ENCODE measurements at regions of chr4 and their contacts with region 1.

Region 1: GRCh38 chr4:140637836-140638235 is 69.1 kb upstream of the UCP1 start:
- DNase-seq: peak in 1 of 2 experiments; percentile 19
- H3K4me3 ChIP-seq: no peak overlapping the region
- H3K4me3 Mint-ChIP-seq: no peak overlapping the region
- H3K27ac Mint-ChIP-seq: peak overlapping the region; percentile 14
- H3K4me1 ChIP-seq: peaks cover 48% of the 10 kb centered on the region
- H3K4me1 Mint-ChIP-seq: peaks cover 34% of the 10 kb centered on the region
- H3K27me3 ChIP-seq: no peaks in the 10 kb centered on the region
- H3K27me3 Mint-ChIP-seq: no peaks in the 10 kb centered on the region
- CTCF ChIP-seq: peak in 1 of 2 experiments; percentile 36

Region 2: GRCh38 chr4:140615460-140615859 is 22.4 kb before region 1 on chr4:
- CTCF ChIA-PET with region 1: no interaction called
- POLR2A ChIA-PET with region 1: no interaction called
- intact Hi-C with region 1: loop called (anchors 1 kb)
- DNase-seq: peak in 1 of 2 experiments; percentile 29
- H3K4me3 ChIP-seq: no peak overlapping the region
- H3K4me3 Mint-ChIP-seq: no peak overlapping the region
- H3K27ac Mint-ChIP-seq: no peak overlapping the region
- H3K4me1 ChIP-seq: peaks cover 16% of the 10 kb centered on the region
- H3K4me1 Mint-ChIP-seq: no peaks in the 10 kb centered on the region
- H3K27me3 ChIP-seq: no peaks in the 10 kb centered on the region
- H3K27me3 Mint-ChIP-seq: no peaks in the 10 kb centered on the region
- CTCF ChIP-seq: no peak

Region 3: DNA sequence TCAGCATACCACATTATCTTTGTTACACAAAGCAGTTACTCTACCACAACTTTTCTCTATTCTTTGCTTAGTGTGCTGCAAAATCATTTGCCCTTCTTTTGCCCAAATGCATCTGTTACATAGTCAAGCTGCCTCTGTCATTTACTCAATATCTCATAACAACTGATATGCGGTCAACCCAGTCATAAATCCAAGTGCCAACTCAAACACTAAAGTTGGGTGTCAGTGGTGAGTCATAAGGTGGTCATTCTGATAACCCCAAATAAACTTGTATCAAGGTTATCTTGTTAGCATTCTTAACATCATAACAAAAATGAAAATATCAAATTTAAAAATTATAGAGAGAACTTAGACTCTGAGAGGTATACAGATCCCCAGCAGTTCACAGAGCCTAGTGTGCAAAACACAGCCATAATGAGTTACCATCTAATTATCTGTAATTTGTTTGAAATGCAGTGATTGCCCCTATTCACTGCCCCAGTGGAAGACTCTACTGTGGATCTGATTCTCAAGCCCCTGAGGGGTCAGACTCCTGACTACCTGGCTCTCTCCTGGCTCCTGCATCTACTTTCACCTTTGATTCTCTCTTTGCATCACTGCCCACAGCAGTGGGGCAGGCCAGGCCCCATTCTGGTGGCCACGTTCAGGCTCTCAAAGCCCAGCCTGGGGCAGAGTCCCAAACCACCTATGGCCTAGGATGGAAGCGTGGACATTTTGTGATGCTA is 89.1 kb after region 1 on chr4:
- CTCF ChIA-PET with region 1: no interaction called
- POLR2A ChIA-PET with region 1: no interaction called
- intact Hi-C with region 1: loop called (anchors 1 kb)
- DNase-seq: no peak
- H3K4me3 ChIP-seq: no peak overlapping the region
- H3K4me3 Mint-ChIP-seq: peak overlapping the region; percentile 22
- H3K27ac Mint-ChIP-seq: peak overlapping the region; percentile 87
- H3K4me1 ChIP-seq: peaks cover 46% of the 10 kb centered on the region
- H3K4me1 Mint-ChIP-seq: peaks cover 22% of the 10 kb centered on the region
- H3K27me3 ChIP-seq: no peaks in the 10 kb centered on the region
- H3K27me3 Mint-ChIP-seq: no peaks in the 10 kb centered on the region
- CTCF ChIP-seq: no peak

Region 4: DNA sequence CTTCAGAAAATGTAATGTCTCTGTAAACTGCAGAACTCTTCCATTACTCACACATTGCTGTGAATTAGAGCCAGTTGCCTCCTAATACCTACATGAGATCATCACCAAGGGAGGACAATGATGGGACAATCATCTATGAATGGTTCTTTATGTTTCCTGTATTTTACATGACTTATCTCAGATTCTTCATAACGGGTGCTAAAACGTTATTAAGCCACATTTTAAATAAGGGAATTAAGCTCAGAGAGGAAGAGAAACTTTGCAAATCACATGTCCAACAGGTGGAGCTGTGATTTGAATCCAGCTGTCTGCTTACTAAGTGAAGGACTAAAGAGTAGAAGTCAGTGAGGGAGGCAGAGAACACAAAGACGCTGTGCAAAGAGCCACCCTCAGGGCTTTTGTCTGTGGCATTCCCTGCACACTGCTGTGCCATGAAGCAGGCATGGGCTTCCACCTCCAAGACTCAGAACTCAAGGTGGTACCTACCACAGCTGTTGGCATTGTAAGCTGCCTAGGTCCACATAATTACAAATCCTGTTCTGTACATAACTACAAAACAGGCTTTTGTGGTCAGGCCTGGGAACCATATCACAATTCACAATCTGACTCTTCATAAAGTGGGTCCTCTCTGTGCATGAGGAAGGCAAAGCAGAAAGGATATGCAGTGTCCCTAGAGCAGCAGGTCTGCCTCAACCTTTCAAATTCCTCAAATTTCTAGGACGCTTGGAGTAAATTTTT is 105.5 kb after region 1 on chr4:
- CTCF ChIA-PET with region 1: no interaction called
- POLR2A ChIA-PET with region 1: no interaction called
- intact Hi-C with region 1: no loop called
- DNase-seq: peak in 1 of 2 experiments; percentile 27
- H3K4me3 ChIP-seq: no peak overlapping the region
- H3K4me3 Mint-ChIP-seq: no peak overlapping the region
- H3K27ac Mint-ChIP-seq: peak overlapping the region; percentile 67
- H3K4me1 ChIP-seq: peaks cover 44% of the 10 kb centered on the region
- H3K4me1 Mint-ChIP-seq: peaks cover 28% of the 10 kb centered on the region
- H3K27me3 ChIP-seq: no peaks in the 10 kb centered on the region
- H3K27me3 Mint-ChIP-seq: no peaks in the 10 kb centered on the region
- CTCF ChIP-seq: no peak